Common myeloid progenitor, CD34-positive (primary cell): ENCODE measurements at regions of chr5 and their contacts with region 1.

Region 1: DNA sequence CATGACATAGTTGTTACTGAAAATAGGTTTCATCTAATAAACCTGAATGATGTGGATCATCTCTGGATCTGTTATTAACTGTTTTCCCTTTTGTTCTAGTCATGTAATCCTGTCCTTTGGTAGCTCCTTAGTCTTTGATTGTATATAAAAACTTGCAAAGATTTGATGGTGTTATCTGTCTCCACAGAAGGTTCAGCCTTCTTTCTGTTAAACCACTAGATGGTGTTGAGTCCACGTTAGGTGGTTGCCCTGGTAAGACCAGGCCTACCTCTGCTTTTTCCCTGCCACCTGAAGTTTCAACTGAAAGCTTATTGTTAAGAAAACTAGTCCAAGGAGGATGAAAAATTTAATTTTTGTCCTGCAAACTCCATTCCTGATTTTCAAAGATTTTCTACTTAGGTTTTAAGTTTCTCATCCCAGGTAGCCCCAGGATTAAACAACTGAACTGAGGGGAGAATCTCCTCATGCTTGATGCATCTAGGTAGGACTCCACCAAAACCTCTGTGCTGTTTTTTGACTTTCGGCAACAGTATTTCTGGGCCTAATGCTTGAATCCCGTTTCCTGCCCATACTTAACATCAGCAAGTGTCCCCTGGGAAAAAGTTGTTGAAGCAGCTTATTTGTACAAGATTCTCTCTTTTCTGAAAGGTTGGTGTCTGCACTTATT is 68.5 kb downstream of the RICTOR start:
- DNase-seq: peak; percentile 65 to 82 (median 77)
- H3K4me3 ChIP-seq: no peak overlapping the region
- H3K27ac ChIP-seq: peak overlapping the region in 1 of 2 experiments; percentile 35
- H3K4me1 ChIP-seq: peaks cover 0 to 6% (median 1%) of the 10 kb centered on the region in 4 experiments
- H3K27me3 ChIP-seq: no peaks in the 10 kb centered on the region

Region 2: GRCh38 chr5:38888041-38888440 is 117.7 kb before region 1 on chr5:
- CTCF ChIA-PET with region 1: no interaction called
- POLR2A ChIA-PET with region 1: no interaction called
- DNase-seq: peak in 1 of 3 donors; percentile 2
- H3K4me3 ChIP-seq: no peak overlapping the region
- H3K27ac ChIP-seq: no peak overlapping the region
- H3K4me1 ChIP-seq: no peaks in the 10 kb centered on the region
- H3K27me3 ChIP-seq: peaks cover 0 to 54% (median 11%) of the 10 kb centered on the region in 5 experiments

Region 3: DNA sequence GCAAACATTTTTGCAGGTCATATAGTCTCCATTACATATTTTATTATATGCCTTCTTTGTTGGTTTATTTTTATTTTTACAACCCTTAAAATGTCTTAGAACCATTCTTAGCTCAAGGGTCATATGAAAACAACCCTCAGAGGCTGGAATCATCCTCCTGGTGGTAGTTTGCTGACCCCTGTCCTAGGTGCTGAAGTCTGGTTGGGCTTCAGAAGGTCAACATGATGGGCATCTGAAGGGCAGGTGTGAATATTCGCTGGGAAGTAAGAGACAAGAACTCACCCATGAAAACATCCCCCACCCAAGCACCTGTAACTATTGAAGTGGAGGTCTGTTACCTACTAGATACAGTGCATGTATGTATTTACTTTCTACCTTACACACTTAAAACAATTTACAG is 84.5 kb before region 1 on chr5:
- CTCF ChIA-PET with region 1: no interaction called
- POLR2A ChIA-PET with region 1: no interaction called
- DNase-seq: peak in 1 of 3 donors; percentile 11
- H3K4me3 ChIP-seq: no peak overlapping the region
- H3K27ac ChIP-seq: no peak overlapping the region
- H3K4me1 ChIP-seq: no peaks in the 10 kb centered on the region
- H3K27me3 ChIP-seq: peaks cover 0 to 50% (median 14%) of the 10 kb centered on the region in 5 experiments

Region 4: GRCh38 chr5:39021413-39021812 is 15.7 kb after region 1 on chr5:
- CTCF ChIA-PET with region 1: interaction called, 14 read pairs
- POLR2A ChIA-PET with region 1: no interaction called
- DNase-seq: no peak
- H3K4me3 ChIP-seq: no peak overlapping the region
- H3K27ac ChIP-seq: no peak overlapping the region
- H3K4me1 ChIP-seq: peaks cover 0 to 6% (median 1%) of the 10 kb centered on the region in 4 experiments
- H3K27me3 ChIP-seq: no peaks in the 10 kb centered on the region

Region 5: DNA sequence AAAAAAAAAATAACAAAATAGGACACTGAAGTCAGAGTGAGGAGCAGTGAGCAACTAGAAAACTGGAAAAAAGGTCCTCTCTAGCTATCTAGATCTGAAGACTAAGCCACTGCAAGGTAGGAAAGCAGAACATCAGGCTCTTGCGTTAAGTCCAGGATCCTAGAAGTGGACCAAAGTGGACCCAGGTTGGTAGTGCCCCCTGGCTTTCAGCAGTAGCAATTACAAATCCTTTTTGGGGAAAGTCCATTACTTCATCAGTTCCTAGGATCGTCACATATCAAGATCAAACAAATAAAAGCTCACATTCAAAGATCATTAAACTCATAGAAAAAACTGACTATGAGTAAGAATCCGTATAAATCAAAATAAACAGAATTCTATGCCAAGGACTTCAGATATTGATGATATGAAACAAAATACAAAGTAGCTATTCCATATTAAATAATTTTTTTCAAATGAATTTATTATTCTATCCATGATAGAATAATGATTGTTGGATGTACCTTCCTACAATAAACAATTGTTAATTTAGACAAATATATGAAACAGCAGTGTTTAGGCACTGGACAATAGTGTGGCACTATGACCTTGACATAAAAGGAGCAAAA is 75.0 kb after region 1 on chr5:
- CTCF ChIA-PET with region 1: interaction called, 79 read pairs
- POLR2A ChIA-PET with region 1: interaction called, 5 read pairs
- DNase-seq: peak; percentile 74 to 79 (median 77)
- H3K4me3 ChIP-seq: peak overlapping the region in 1 of 7 experiments; percentile 48
- H3K27ac ChIP-seq: no peak overlapping the region
- H3K4me1 ChIP-seq: peaks cover 9 to 31% (median 14%) of the 10 kb centered on the region in 4 experiments
- H3K27me3 ChIP-seq: no peaks in the 10 kb centered on the region

Region 6: DNA sequence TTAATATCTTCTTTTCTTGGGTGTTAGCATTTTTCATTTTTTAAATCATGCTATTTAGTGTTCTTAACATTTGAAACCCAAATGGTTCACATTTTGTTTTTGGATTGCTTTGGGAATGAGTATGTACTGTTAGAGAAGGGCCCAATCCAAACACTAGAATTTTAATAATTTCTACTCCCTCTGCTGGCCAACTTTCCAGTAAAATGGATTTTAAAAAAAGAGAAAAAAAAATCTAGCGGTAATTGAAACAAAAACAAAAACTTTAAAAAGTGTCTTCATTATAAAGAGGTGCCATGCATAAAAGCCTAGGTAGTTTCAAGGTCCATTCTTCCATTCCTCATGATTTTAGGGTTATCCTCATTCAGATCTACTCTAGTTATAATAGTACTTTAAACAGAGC is 100.6 kb after region 1 on chr5:
- CTCF ChIA-PET with region 1: interaction called, 14 read pairs
- POLR2A ChIA-PET with region 1: no interaction called
- DNase-seq: peak; percentile 36 to 50 (median 48)
- H3K4me3 ChIP-seq: no peak overlapping the region
- H3K27ac ChIP-seq: no peak overlapping the region
- H3K4me1 ChIP-seq: no peaks in the 10 kb centered on the region
- H3K27me3 ChIP-seq: no peaks in the 10 kb centered on the region

Region 7: DNA sequence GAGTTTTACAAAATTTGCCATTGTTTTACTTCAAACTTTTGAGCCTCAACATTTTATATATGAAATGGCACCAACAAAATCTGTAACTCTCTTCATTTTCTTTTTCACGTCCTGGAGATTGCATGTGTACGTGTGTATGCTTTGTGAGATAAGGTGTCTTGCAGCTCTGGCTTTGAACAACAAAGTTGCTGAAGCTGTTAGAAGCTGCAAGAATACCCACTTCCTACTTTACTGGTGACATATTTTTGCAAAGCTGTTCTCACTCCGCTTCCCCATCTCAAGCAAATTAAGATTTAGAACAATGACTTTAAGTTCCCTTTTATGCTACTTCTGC is 171.9 kb after region 1 on chr5:
- CTCF ChIA-PET with region 1: no interaction called
- POLR2A ChIA-PET with region 1: no interaction called
- DNase-seq: peak; percentile 63 to 95 (median 91)
- H3K4me3 ChIP-seq: peak overlapping the region in 3 of 7 experiments; percentile 32 to 45 (median 37)
- H3K27ac ChIP-seq: peak overlapping the region in 1 of 2 experiments; percentile 69
- H3K4me1 ChIP-seq: peaks cover 28 to 62% (median 40%) of the 10 kb centered on the region in 4 experiments
- H3K27me3 ChIP-seq: no peaks in the 10 kb centered on the region